PC-9 (cell line): ENCODE measurements at regions of chr6 and their contacts with region 1.

Region 1: GRCh38 chr6:124747349-124747748 is 214.9 kb upstream of the RNF217 start:
- DNase-seq: no peak
- H3K4me3 ChIP-seq: no peak overlapping the region
- H3K27ac ChIP-seq: no peak overlapping the region
- H3K4me1 ChIP-seq: no peaks in the 10 kb centered on the region
- H3K27me3 ChIP-seq: no peaks in the 10 kb centered on the region
- CTCF ChIP-seq: no peak

Region 2: DNA sequence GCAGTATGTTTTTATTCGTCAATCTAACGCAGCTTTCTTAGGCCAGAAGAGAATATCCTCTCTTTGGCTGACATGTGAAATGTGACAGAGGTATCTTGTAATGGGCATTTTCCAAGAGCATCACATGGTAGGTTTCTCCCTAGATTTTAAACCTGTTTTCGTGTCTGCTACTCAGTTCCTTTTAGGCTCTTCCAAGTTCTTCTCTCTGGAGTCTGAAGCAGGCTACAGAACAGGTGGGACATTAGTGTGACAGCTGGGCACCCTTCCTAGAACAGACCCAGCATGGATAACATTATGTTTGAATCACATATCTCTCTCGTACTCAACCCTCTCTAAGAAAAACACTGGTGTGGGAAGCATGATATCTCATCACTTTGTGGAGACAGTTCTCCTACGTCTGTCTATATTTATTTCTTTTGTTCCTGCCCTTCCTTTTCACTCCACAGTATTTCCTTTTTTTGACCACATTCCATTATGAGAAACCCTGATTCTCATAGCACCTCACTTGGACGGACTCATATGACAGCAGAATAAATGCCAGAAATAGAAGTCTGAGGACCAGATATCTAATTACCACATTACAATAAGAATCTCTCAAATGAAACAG is 680.3 kb before region 1 on chr6:
- CTCF ChIA-PET with region 1: no interaction called
- POLR2A ChIA-PET with region 1: no interaction called
- intact Hi-C with region 1: no loop called
- DNase-seq: no peak
- H3K4me3 ChIP-seq: no peak overlapping the region
- H3K27ac ChIP-seq: no peak overlapping the region
- H3K4me1 ChIP-seq: no peaks in the 10 kb centered on the region
- H3K27me3 ChIP-seq: no peaks in the 10 kb centered on the region
- CTCF ChIP-seq: no peak

Region 3: DNA sequence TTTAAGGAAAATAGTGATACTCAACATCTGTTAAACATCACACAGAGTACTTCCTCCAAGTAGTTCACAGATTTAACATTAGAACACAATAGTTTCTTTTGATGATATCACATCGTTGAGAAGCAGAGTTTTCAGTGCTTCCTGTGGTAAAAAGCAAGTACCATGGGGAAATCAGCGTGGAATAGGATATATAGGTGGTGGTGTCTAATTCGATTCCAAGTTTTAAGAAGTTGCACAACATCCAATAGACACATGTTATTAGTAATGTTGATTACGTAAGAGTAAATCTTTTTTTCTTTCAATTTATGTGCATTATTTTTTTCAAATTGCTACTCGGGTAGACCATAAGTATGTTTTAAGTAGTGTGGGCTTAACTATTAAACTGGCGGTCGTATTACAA is 583.0 kb before region 1 on chr6:
- CTCF ChIA-PET with region 1: no interaction called
- POLR2A ChIA-PET with region 1: no interaction called
- intact Hi-C with region 1: no loop called
- DNase-seq: no peak
- H3K4me3 ChIP-seq: no peak overlapping the region
- H3K27ac ChIP-seq: no peak overlapping the region
- H3K4me1 ChIP-seq: no peaks in the 10 kb centered on the region
- H3K27me3 ChIP-seq: no peaks in the 10 kb centered on the region
- CTCF ChIP-seq: no peak

Region 4: GRCh38 chr6:124703541-124703940 is 43.8 kb before region 1 on chr6:
- CTCF ChIA-PET with region 1: no interaction called
- POLR2A ChIA-PET with region 1: no interaction called
- intact Hi-C with region 1: loop called (anchors 2 kb)
- DNase-seq: no peak
- H3K4me3 ChIP-seq: no peak overlapping the region
- H3K27ac ChIP-seq: no peak overlapping the region
- H3K4me1 ChIP-seq: no peaks in the 10 kb centered on the region
- H3K27me3 ChIP-seq: no peaks in the 10 kb centered on the region
- CTCF ChIP-seq: no peak

Region 5: GRCh38 chr6:124819346-124819745 is 72.0 kb after region 1 on chr6:
- CTCF ChIA-PET with region 1: no interaction called
- POLR2A ChIA-PET with region 1: no interaction called
- intact Hi-C with region 1: no loop called
- DNase-seq: no peak
- H3K4me3 ChIP-seq: no peak overlapping the region
- H3K27ac ChIP-seq: no peak overlapping the region
- H3K4me1 ChIP-seq: no peaks in the 10 kb centered on the region
- H3K27me3 ChIP-seq: peaks cover 4% of the 10 kb centered on the region; the same call in 1 of the 2 replicates
- CTCF ChIP-seq: no peak

Region 6: DNA sequence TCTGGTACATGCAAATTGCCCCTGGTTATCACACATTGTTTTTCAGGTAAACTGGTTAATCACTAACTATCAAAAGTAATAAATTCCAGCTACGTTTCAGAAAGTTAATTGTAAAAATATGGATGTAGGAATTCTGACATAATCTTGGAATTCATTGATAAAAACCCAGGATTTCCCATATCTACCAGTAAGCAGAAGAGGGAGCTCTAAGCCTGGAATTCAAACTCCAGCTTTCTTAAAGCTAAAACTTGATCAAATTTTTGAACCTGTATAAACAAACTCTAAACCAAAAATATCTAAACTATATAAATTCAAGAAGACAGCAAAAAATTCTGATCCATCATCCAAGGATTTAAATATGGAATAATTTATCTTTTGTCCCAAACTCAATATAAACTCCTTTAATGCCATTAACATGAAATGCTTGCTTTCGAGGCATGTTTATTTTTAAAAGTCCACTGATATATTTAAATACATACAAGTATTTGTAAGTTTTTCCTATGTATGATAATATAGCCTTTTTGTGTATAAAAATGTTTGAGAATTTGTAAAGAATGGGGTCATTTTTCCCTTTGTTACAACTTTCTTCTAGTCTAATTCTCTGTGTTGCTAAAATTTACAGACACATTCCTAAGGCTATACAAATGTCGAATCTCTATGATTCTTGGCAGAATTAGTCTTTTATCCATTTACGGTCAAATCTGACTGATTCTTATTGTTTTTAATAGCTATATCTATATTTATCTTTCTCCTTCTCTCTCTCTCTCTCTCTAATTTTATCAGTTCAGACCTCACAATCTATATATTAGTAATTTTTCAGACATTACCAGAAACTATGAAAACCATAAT is 123.5 kb after region 1 on chr6:
- CTCF ChIA-PET with region 1: no interaction called
- POLR2A ChIA-PET with region 1: no interaction called
- intact Hi-C with region 1: no loop called
- DNase-seq: no peak
- H3K4me3 ChIP-seq: no peak overlapping the region
- H3K27ac ChIP-seq: no peak overlapping the region
- H3K4me1 ChIP-seq: no peaks in the 10 kb centered on the region
- H3K27me3 ChIP-seq: no peaks in the 10 kb centered on the region
- CTCF ChIP-seq: peak; percentile 92